ENCODE measurements at regions of chr20 and their contacts with region 1.

Region 1: GRCh38 chr20:25057234-25058050 is 497 bp downstream of the ACSS1 start:
- DNase-seq: peak; percentile 91

Region 2: GRCh38 chr20:23350196-23350903 is 1707.1 kb before region 1 on chr20 and contains the start of gene NXT1:
- intact Hi-C with region 1: loop called (anchors 10 kb)
- DNase-seq: peak; percentile 99
- total RNA-seq, gene NXT1: 10.6 TPM

Region 3: DNA sequence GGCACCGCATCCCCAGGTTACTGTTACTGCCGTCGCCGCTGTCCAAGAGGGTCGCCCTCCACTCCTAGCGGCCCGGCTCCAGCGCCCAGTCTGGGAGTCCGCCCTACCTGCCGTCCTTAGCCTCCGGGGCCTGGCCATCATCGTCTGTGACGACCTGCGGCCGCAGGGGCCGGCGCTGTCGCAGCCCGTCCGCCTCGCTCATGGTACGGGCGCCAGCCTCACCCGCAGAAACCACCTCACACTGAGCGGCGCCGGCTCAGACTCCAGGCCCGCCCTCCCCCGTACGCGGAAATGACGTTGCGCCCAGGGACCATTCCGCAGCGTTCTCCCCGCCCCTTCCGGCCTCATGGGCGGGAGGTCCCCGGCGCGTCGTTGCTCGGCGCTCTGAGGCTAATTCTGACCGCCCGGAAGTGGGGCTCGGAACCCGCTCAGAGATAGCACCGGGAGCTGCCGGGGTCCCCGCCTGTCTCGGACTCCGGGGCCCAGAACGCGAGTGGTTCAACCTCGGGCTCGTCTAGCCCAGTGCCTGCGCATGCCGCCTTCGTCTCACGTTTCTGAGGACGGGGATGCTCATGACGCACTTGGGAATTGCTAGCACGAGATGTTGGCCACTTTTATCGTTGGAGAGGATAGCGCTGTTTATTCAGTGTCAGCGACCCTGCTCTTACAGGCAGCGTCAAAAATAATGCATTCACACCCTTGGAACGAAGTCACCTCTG is 64.8 kb before region 1 on chr20 and contains the start of gene APMAP:
- intact Hi-C with region 1: loop called (anchors 2 kb)
- DNase-seq: peak; percentile 99
- total RNA-seq, gene APMAP: 28.2 TPM

Region 4: DNA sequence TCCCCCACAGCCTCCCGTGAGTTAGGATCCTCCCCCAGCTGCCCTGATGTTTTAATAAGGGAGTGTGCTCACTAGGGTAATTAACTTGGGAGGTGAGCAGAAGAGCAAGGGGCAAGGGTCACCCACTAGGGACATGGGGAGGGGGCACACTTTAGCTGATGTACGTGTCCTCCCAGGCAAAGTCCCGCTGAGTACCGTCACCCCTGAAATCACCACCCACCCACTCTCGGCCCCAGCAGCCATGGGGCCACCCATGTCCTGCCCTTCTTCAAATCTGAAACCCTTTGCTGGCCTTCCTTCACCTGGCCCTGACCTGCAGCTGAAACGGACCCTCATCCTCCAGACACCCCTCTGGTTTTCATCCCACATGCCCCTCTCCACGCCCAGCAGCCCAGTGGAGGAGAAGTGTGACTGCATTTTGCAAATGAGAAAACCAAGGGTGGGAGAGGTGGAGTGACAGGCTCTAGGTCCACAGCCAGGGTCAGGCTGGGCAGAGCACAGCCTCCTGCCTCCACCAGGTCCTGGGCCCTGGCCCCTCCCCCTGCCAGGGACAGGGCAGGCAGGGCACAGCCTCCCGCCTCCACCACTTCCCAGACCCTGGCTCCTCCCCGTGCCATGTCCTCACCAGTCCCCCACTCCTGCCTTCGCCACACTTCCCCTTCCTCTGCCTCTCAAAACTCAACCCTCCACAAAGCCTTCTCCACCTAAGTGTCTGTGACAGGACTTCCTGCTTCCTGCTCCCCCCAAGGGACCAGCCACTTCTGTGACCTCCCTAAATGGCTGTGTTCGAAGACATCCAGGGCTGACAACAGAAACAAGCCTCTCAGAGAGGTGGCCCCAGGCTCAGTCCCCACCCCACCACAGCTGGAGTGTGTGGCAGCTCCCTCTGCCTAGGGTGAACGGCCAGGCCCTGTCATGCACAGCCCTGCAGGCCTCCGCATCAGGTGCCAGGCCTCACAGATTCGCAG is 14.6 kb before region 1 on chr20:
- intact Hi-C with region 1: loop called (anchors 2 kb)
- DNase-seq: peak; percentile 87

Region 5: GRCh38 chr20:25195014-25195961 is 137.8 kb after region 1 on chr20 and contains the start of gene ENTPD6:
- intact Hi-C with region 1: loop called (anchors 10 kb)
- DNase-seq: peak; percentile 95
- total RNA-seq, gene ENTPD6: 102 TPM

Region 6: GRCh38 chr20:25237610-25238318 is 180.3 kb after region 1 on chr20:
- intact Hi-C with region 1: loop called (anchors 5 kb)
- DNase-seq: no peak

Region 7: DNA sequence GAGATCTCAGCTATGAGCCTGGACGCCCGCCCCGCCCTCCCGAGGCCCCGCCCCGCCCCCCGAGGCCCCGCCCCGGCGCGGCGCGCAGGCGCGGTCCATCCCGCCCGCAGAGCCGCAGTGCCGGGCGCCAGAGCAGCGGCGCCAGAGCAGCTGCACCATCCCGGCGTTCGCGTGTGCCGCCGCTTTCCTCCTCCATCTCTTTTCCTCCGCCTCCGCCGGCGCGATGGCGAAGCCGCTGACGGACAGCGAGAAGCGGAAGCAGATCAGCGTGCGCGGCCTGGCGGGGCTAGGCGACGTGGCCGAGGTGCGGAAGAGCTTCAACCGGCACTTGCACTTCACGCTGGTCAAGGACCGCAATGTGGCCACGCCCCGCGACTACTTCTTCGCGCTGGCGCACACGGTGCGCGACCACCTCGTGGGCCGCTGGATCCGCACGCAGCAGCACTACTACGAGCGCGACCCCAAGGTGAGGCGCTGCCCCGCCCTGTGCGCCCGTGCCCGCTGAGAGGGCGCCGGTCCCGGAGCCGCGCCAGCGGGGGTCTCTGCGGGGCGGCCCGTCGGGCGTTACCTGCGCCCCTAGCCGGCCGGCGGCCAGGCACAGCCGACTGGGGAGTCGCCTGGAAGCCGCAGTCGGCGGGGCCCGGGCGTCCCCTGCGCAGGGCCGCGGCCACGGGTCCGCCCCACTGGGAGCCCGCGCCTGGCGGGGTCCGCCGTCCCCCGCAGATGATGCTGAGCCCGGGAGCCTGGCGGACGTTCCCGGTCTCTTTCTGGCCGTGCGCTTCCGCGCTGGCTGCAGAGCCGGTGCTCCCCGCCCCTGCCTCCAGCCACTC is 190.7 kb after region 1 on chr20 and contains the start of gene PYGB:
- intact Hi-C with region 1: loop called (anchors 5 kb)
- DNase-seq: peak; percentile 91
- total RNA-seq, gene PYGB: 386 TPM